A549 (cell line): ENCODE measurements at regions of chr1 and their contacts with region 1.

Region 1: GRCh38 chr1:153990468-153991150 is at the start of gene RPS27:
- DNase-seq: peak; percentile 97 to 99
- ATAC-seq: peak; percentile 56 to 58
- H3K4me3 ChIP-seq: peak within 1 kb of the TSS; percentile 73
- H3K27ac ChIP-seq: peak within 1 kb of the TSS; percentile 93 to 94
- H3K4me1 ChIP-seq: peaks cover 14% of the 10 kb centered on the region; the same call in 2 of the 3 replicates
- CTCF ChIP-seq: no peak
- EP300 ChIP-seq: no peak
- POLR2A ChIP-seq: peak; percentile 100
- RAD21 ChIP-seq: no peak
- polyA plus RNA-seq, gene RPS27: 4,831 and 9,152 TPM in 2 replicates

Region 2: GRCh38 chr1:153763365-153764225 is 227.0 kb before region 1 on chr1:
- CTCF ChIA-PET with region 1: interaction called, 10 read pairs
- POLR2A ChIA-PET with region 1: interaction called, 3 read pairs
- DNase-seq: no peak
- ATAC-seq: no peak
- H3K4me3 ChIP-seq: no peak overlapping the region
- H3K27ac ChIP-seq: no peak overlapping the region
- H3K4me1 ChIP-seq: no peaks in the 10 kb centered on the region
- CTCF ChIP-seq: no peak
- EP300 ChIP-seq: no peak
- POLR2A ChIP-seq: no peak
- RAD21 ChIP-seq: no peak

Region 3: GRCh38 chr1:153796791-153797659 is 193.6 kb before region 1 on chr1:
- CTCF ChIA-PET with region 1: interaction called, 51 read pairs
- POLR2A ChIA-PET with region 1: interaction called, 8 read pairs
- DNase-seq: peak; percentile 70 to 86
- ATAC-seq: peak; percentile 58 to 83; a peak in 5 of 6 replicates
- H3K4me3 ChIP-seq: no peak overlapping the region
- H3K27ac ChIP-seq: no peak overlapping the region
- H3K4me1 ChIP-seq: no peaks in the 10 kb centered on the region
- CTCF ChIP-seq: peak; percentile 75
- EP300 ChIP-seq: no peak
- POLR2A ChIP-seq: no peak
- RAD21 ChIP-seq: peak; percentile 77 to 81

Region 4: GRCh38 chr1:153827168-153827964 is 163.2 kb before region 1 on chr1:
- CTCF ChIA-PET with region 1: interaction called, 33 read pairs
- POLR2A ChIA-PET with region 1: interaction called, 3 read pairs
- DNase-seq: no peak
- ATAC-seq: peak in 1 of 2 experiments; percentile 59; a peak in 2 of 6 replicates
- H3K4me3 ChIP-seq: no peak overlapping the region
- H3K27ac ChIP-seq: no peak overlapping the region
- H3K4me1 ChIP-seq: no peaks in the 10 kb centered on the region
- CTCF ChIP-seq: no peak
- EP300 ChIP-seq: no peak
- POLR2A ChIP-seq: no peak
- RAD21 ChIP-seq: no peak

Region 5: DNA sequence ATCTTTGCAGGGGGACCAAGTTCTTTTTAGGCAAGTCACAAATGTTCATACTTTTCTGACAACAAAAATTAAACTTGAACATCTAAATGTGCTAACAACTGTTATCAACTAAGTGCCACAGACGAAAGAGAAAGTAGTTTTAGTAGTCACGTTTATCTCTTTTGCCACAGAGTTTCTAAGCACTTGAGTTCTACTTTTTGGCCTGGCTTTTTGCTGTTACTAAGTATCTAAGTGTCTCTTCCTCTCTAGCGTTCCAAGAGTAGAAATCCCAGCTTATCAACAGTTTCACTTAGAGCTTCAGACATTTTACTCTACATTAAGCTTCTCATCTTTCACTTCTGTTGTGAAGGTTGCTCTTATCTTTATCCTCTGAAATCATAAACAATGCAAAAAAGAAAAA is 102.1 kb before region 1 on chr1:
- CTCF ChIA-PET with region 1: no interaction called
- POLR2A ChIA-PET with region 1: no interaction called
- DNase-seq: no peak
- ATAC-seq: no peak
- H3K4me3 ChIP-seq: no peak overlapping the region
- H3K27ac ChIP-seq: no peak overlapping the region
- H3K4me1 ChIP-seq: no peaks in the 10 kb centered on the region
- CTCF ChIP-seq: no peak
- EP300 ChIP-seq: no peak
- POLR2A ChIP-seq: no peak
- RAD21 ChIP-seq: no peak

Region 6: DNA sequence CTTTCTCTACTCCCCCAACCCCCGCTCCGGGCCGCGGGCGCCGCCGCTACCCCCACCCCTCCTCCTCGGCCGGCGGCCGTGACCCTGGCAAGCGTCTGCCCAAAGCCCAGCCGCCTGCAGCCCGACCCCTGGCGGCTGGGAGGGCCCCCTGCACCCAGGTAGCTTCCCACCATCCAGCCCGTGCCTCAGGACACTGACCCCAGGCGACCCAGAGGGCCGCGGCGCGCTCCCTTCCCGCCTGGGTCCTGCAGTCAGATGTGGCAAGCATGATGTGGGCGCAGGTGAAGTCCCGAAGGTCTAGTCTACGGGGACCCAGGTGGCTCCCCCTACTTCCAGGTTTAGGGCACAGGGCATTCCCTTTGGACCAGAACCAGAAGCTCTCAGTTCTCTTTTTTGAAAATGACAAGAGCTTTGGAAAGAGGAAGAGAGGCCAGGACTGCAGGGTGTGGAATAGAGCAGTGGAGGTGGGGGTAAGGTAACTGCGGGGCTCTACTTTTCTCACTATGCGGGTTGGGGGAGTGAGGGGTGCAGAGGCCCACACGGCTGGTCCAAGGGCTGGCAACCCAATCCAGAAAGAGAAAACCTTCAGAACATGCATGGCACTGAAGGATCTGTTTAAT is 43.9 kb before region 1 on chr1 and contains the start of gene DENND4B:
- CTCF ChIA-PET with region 1: interaction called, 21 read pairs
- POLR2A ChIA-PET with region 1: interaction called, 4 read pairs
- DNase-seq: peak; percentile 83 to 98
- ATAC-seq: peak; percentile 93 to 95
- H3K4me3 ChIP-seq: peak within 1 kb of the TSS; percentile 99
- H3K27ac ChIP-seq: peak within 1 kb of the TSS; percentile 98 to 99
- H3K4me1 ChIP-seq: peaks cover 16% of the 10 kb centered on the region
- CTCF ChIP-seq: peak; percentile 91
- EP300 ChIP-seq: no peak
- POLR2A ChIP-seq: no peak
- RAD21 ChIP-seq: peak; percentile 35 to 52; a peak in 4 of 5 replicates
- polyA plus RNA-seq, gene DENND4B: 18.7 and 24.1 TPM in 2 replicates

Region 7: GRCh38 chr1:153967082-153968000 is 23.3 kb before region 1 on chr1 and contains the start of gene CREB3L4:
- CTCF ChIA-PET with region 1: interaction called, 90 read pairs
- POLR2A ChIA-PET with region 1: interaction called, 40 read pairs
- DNase-seq: peak; percentile 92 to 99
- ATAC-seq: peak; percentile 79 to 89
- H3K4me3 ChIP-seq: peak within 1 kb of the TSS; percentile 64
- H3K27ac ChIP-seq: peak within 1 kb of the TSS; percentile 90 to 92
- H3K4me1 ChIP-seq: peaks cover 19% of the 10 kb centered on the region
- CTCF ChIP-seq: peak; percentile 29; the same call in 1 of the 3 replicates
- EP300 ChIP-seq: no peak
- POLR2A ChIP-seq: peak; percentile 87
- RAD21 ChIP-seq: no peak; a peak in 1 of 5 replicates
- polyA plus RNA-seq, gene CREB3L4: 14.3 and 18.0 TPM in 2 replicates

Region 8: GRCh38 chr1:154220071-154220969 is 229.7 kb after region 1 on chr1 and contains the start of gene UBAP2L:
- CTCF ChIA-PET with region 1: no interaction called
- POLR2A ChIA-PET with region 1: interaction called, 19 read pairs
- DNase-seq: peak; percentile 92 to 100
- ATAC-seq: peak; percentile 92 to 95
- H3K4me3 ChIP-seq: peak within 1 kb of the TSS; percentile 98
- H3K27ac ChIP-seq: peak within 1 kb of the TSS; percentile 99 to 100
- H3K4me1 ChIP-seq: peaks cover 45% of the 10 kb centered on the region
- CTCF ChIP-seq: no peak
- EP300 ChIP-seq: no peak
- POLR2A ChIP-seq: peak; percentile 80
- RAD21 ChIP-seq: no peak
- polyA plus RNA-seq, gene UBAP2L: 137 and 169 TPM in 2 replicates

Region 9: GRCh38 chr1:154344977-154345837 is 354.6 kb after region 1 on chr1:
- CTCF ChIA-PET with region 1: no interaction called
- POLR2A ChIA-PET with region 1: no interaction called
- DNase-seq: peak; percentile 41 to 76
- ATAC-seq: peak in 1 of 2 experiments; percentile 78; a peak in 3 of 6 replicates
- H3K4me3 ChIP-seq: no peak overlapping the region
- H3K27ac ChIP-seq: no peak overlapping the region
- H3K4me1 ChIP-seq: no peaks in the 10 kb centered on the region
- CTCF ChIP-seq: peak; percentile 62
- EP300 ChIP-seq: no peak
- POLR2A ChIP-seq: no peak
- RAD21 ChIP-seq: peak; percentile 39 to 66; a peak in 4 of 5 replicates

Region 10: GRCh38 chr1:154557939-154558574 is 567.4 kb after region 1 on chr1:
- CTCF ChIA-PET with region 1: no interaction called
- POLR2A ChIA-PET with region 1: no interaction called
- DNase-seq: no peak
- ATAC-seq: peak in 1 of 2 experiments; percentile 14; a peak in 2 of 6 replicates
- H3K4me3 ChIP-seq: peak overlapping the region; percentile 85
- H3K27ac ChIP-seq: peak overlapping the region; percentile 93 to 96
- H3K4me1 ChIP-seq: peaks cover 16% of the 10 kb centered on the region
- CTCF ChIP-seq: no peak
- EP300 ChIP-seq: no peak
- POLR2A ChIP-seq: no peak
- RAD21 ChIP-seq: no peak